ENCODE measurements at regions of chr1 and their contacts with region 1.

Region 1: DNA sequence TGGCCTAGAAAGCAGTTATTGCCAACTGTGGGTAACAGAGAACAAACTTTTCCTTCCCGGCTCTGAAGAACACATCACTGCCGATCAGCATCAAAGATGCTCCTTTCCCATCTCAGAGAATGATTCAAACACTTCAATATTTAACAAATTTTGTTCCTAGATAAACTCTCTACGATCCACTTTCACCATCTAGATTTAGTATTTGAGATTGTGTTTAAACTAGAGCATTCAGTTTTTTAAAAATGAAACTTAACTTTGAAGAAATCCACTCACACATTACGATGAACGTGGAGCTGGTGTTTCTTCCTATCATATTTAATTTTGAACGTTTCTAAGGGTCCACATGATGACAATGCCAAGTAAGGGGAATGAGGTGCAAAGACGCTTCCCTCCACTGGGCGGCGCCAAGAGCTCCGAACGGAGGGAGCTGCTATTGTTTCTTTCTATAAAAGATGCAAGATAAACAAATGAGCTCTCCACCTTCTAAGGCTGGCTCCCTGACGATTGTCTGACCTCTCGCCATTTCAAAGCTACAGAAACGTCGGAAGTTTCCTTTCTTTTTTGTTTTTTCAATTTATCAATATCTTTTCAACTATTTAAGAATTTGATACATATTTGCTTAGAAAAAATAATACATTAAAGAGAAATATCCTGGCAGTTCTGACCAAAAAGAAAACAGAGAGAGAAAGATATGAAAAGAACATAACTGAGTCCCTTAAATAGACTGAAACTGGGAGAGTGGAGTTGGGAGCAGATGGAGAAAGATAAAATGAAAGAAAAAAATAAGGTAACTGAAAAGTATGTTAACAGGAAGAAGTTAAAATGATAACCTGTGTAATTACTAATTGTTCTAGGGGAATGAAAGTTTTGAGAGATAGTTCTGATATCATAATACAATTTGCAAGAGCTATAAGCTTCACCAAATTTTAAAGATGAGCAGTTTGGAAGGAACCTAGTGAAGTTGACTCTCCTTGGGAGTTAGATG is 4.4 kb upstream of the BARHL2 start:
- DNase-seq: peak; percentile 68
- ATAC-seq: peak; percentile 47
- H3K4me3 Mint-ChIP-seq: no peak overlapping the region
- H3K27ac Mint-ChIP-seq: no peak overlapping the region
- H3K4me1 Mint-ChIP-seq: peaks cover 43% of the 10 kb centered on the region
- H3K27me3 Mint-ChIP-seq: peaks cover 87% of the 10 kb centered on the region

Region 2: DNA sequence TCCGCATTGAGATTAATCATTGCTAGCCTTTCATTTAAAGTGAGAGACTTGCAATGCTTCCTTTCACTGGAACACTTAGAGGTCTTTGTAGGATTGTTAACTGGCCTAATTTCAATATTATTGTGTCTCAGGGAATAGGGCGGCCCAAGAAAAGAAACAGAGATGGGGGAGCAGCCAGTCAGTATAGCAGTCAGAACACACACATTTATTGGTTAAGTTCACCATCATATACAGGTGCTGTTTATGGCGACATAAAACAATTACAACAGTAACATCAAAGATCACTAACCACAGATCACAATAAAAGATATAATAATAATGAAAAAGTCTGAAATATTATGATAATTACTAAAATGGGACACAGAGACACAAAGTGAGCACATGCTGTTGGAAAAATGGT is 33.8 kb before region 1 on chr1:
- CTCF ChIA-PET with region 1: no interaction called
- POLR2A ChIA-PET with region 1: no interaction called
- DNase-seq: no peak
- ATAC-seq: no peak
- H3K4me3 Mint-ChIP-seq: no peak overlapping the region
- H3K27ac Mint-ChIP-seq: no peak overlapping the region
- H3K4me1 Mint-ChIP-seq: no peaks in the 10 kb centered on the region
- H3K27me3 Mint-ChIP-seq: peaks cover 8% of the 10 kb centered on the region

Region 3: GRCh38 chr1:90707363-90707710 is 14.2 kb before region 1 on chr1:
- CTCF ChIA-PET with region 1: interaction called, 31 read pairs
- POLR2A ChIA-PET with region 1: interaction called, 6 read pairs
- DNase-seq: no peak
- ATAC-seq: no peak
- H3K4me3 Mint-ChIP-seq: peak overlapping the region; percentile 25
- H3K27ac Mint-ChIP-seq: no peak overlapping the region
- H3K4me1 Mint-ChIP-seq: peaks cover 10% of the 10 kb centered on the region
- H3K27me3 Mint-ChIP-seq: peaks cover 69% of the 10 kb centered on the region

Region 4: DNA sequence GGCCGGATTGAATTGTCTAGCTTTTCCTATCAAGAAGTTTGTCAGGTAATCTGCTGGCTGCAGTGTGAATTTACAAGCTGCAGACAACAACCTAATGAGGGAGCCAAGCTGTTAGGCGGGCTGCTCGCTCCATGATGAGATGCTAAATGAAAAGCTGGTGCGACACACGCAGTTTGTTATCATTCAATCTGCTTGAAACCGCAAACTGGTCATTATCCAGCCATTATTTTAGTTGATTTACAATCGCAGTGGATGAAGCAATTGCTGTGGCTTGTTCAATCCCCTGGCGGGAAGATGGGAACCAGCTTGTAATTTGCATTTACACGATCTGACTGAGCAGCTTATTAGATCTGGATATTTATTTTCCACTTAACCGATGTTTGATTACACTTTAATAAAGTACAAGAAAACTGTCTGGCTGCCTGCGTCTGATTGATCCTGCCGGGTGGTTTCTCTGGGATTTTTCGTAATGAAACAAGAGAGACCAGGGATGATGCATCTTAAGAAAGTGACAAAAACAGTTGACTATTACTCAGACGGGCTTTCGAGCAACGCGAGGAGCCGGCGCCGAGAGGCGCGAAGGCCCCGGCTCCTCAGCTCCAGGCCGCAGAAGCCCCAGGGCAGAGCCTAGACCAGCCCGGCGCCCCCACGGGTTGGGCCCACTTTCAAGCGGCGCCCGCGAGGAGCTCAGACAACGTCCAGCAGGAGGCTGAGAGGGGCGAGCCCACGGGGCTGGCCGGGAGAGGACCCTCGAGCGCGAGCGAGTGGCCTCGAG is 113.6 kb after region 1 on chr1:
- CTCF ChIA-PET with region 1: interaction called, 14 read pairs
- POLR2A ChIA-PET with region 1: no interaction called
- DNase-seq: no peak
- ATAC-seq: no peak
- H3K4me3 Mint-ChIP-seq: no peak overlapping the region
- H3K27ac Mint-ChIP-seq: no peak overlapping the region
- H3K4me1 Mint-ChIP-seq: peaks cover 7% of the 10 kb centered on the region
- H3K27me3 Mint-ChIP-seq: peaks cover 87% of the 10 kb centered on the region

Region 5: DNA sequence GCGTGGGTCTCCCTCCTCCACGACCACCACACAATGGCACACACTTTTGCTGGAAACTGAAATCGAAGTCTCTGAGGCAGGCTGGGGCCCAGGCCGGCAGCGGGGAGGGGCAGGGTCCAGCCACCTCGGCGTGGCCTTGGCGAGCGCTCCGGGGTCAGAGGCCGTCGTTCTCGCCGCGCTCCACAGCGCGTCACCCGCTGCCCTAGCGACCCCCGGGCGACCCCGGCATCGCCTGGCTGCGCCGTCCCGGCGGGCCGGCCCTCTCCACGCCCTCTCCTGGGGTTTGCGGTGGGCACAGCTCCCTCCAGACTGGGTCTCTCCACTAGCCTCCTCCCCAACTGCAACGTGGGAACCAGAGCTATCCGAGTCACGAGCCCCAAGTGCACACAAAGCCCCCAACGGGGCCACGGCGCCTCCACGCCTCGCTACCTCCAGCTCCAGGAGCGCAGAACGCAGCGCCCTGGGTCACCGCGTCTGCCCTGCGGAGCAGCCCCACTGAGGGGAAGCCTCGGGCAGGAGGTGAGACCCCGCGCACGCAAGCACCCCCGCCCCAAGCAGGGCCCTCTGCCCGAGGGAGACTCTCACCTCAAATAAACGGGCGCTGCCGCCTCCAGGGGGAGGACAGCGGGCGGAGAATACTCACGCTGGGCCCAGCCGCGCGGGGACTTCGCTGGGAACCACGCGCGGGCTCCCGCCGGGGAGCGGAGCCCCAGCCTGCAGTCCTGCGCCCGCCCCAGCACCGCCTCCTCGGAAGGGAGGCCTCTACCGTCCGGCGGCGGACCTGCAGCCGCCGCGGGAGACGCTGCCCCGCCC is 129.6 kb after region 1 on chr1:
- CTCF ChIA-PET with region 1: interaction called, 18 read pairs
- POLR2A ChIA-PET with region 1: no interaction called
- DNase-seq: peak; percentile 81
- ATAC-seq: peak; percentile 99
- H3K4me3 Mint-ChIP-seq: peak overlapping the region; percentile 70
- H3K27ac Mint-ChIP-seq: no peak overlapping the region
- H3K4me1 Mint-ChIP-seq: peaks cover 13% of the 10 kb centered on the region
- H3K27me3 Mint-ChIP-seq: peaks cover 54% of the 10 kb centered on the region

Region 6: GRCh38 chr1:90964444-90965035 is 243.0 kb after region 1 on chr1:
- CTCF ChIA-PET with region 1: interaction called, 15 read pairs
- POLR2A ChIA-PET with region 1: no interaction called
- DNase-seq: no peak
- ATAC-seq: no peak
- H3K4me3 Mint-ChIP-seq: no peak overlapping the region
- H3K27ac Mint-ChIP-seq: no peak overlapping the region
- H3K4me1 Mint-ChIP-seq: peaks cover under 1% of the 10 kb centered on the region
- H3K27me3 Mint-ChIP-seq: no peaks in the 10 kb centered on the region

Region 7: GRCh38 chr1:91165033-91165654 is 443.6 kb after region 1 on chr1:
- CTCF ChIA-PET with region 1: interaction called, 15 read pairs
- POLR2A ChIA-PET with region 1: no interaction called
- DNase-seq: peak; percentile 73
- ATAC-seq: peak; percentile 89
- H3K4me3 Mint-ChIP-seq: no peak overlapping the region
- H3K27ac Mint-ChIP-seq: no peak overlapping the region
- H3K4me1 Mint-ChIP-seq: no peaks in the 10 kb centered on the region
- H3K27me3 Mint-ChIP-seq: no peaks in the 10 kb centered on the region